ENCODE measurements at regions of chr14 and their contacts with region 1.

Region 1: DNA sequence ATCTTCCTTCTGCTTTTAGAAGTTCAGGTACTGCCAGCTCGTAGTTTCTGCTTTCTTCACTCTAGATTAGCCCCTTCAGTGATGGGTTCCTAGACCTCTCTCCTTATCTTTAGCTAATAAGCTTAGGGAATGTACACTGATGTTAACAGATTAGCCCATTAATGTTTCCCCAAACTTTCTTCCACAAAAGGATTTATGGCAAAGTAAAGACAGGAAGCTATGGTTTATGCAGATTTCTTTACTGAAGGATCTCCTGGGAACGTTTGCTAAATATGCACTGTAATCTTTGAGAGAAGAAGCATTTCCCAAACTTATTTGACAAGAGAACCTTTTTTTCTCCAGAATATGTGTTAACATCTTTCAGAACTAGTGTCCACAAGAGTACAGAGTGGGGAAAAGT is 4.2 kb downstream of the SOCS4 start:
- DNase-seq: peak; percentile 73
- H3K4me3 ChIP-seq: peak overlapping the region; percentile 4
- H3K27ac ChIP-seq: peak overlapping the region; percentile 61
- H3K4me1 ChIP-seq: peaks cover 46% of the 10 kb centered on the region
- H3K27me3 ChIP-seq: no peaks in the 10 kb centered on the region
- CTCF ChIP-seq: no peak

Region 2: DNA sequence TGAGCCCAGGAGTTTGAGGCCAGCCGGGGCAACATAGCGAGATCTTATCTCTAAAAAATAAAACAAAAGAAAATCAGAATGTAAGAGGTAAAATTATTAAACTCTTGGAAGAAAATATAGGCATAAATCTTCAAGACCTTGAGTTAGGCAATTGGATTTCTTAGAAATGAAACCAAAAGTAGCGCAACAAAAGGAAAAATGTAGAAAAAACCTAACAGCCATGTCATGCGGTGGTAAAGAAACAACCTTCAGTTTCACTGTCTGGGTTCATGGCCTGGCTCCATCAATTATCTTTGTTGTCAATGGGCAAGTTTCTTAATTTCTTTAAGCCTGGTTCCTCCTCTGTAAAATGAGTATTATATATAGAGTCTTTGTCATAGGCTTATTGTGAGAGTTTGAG is 123.0 kb before region 1 on chr14:
- CTCF ChIA-PET with region 1: no interaction called
- POLR2A ChIA-PET with region 1: no interaction called
- intact Hi-C with region 1: no loop called
- DNase-seq: no peak
- H3K4me3 ChIP-seq: no peak overlapping the region
- H3K27ac ChIP-seq: no peak overlapping the region
- H3K4me1 ChIP-seq: no peaks in the 10 kb centered on the region
- H3K27me3 ChIP-seq: no peaks in the 10 kb centered on the region
- CTCF ChIP-seq: no peak

Region 3: DNA sequence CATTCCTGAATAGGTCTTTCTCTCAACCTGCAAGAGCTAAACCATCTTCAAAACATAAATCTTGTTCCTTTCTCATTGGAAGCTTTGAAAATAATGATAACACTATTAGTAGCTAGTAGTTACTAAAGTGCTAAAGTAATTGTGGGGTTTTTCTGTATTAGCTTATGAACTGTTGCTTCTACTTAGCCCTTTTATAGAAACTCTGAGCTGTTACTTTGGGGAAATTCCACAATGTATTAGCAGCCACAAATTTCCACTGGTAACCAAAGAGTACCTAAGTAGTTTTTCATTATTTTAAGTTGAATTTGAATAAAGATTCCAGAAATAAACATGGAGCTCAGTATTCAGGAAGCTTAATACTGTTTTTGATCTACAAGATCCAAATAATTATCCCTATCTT is 13.9 kb after region 1 on chr14:
- CTCF ChIA-PET with region 1: interaction called, 3 read pairs
- POLR2A ChIA-PET with region 1: interaction called, 4 read pairs
- intact Hi-C with region 1: loop called (anchors 2 kb)
- DNase-seq: no peak
- H3K4me3 ChIP-seq: no peak overlapping the region
- H3K27ac ChIP-seq: no peak overlapping the region
- H3K4me1 ChIP-seq: peaks cover 55% of the 10 kb centered on the region
- H3K27me3 ChIP-seq: no peaks in the 10 kb centered on the region
- CTCF ChIP-seq: no peak

Region 4: DNA sequence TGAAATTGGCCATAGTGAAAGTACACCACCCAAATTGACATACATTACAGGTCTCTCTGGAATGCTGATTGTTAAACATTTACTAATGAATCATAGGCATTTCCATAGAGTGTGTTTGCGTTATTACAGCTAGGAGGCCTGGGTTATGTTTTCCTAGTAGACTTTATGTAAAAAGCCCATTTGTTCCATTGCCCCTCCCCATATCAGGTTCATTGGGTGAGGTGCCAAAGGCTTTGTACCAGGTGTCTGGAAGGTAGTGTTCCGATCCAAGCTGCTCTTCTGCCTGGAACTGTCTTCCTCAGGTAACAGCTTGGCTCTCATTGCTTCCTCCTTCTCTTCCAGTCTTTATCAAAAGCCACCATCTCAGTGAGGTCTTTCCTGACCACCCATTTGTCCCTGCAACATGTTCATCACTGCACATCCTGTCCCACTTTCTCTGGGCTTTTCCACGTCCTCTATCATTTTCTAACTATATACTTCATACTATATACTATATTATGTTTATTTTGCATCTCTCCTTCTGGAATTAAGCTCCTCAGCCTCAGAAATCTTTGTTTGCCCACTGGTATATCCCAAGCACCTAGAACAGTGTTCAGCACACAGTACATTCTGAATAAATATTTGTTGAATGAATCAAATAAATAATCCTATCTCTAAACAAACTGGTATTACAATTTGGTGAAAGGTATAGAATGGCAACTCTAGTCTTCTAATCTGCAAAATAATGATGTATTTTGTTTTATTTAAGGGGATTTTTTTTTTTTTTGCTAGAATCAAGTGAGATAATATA is 801.1 kb after region 1 on chr14:
- CTCF ChIA-PET with region 1: no interaction called
- POLR2A ChIA-PET with region 1: no interaction called
- intact Hi-C with region 1: no loop called
- DNase-seq: no peak
- H3K4me3 ChIP-seq: no peak overlapping the region
- H3K27ac ChIP-seq: no peak overlapping the region
- H3K4me1 ChIP-seq: no peaks in the 10 kb centered on the region
- H3K27me3 ChIP-seq: no peaks in the 10 kb centered on the region
- CTCF ChIP-seq: no peak

Region 5: GRCh38 chr14:56659964-56660551 is 1628.9 kb after region 1 on chr14:
- CTCF ChIA-PET with region 1: no interaction called
- POLR2A ChIA-PET with region 1: no interaction called
- intact Hi-C with region 1: no loop called
- DNase-seq: peak; percentile 90
- H3K4me3 ChIP-seq: peak overlapping the region; percentile 29
- H3K27ac ChIP-seq: peak overlapping the region; percentile 84
- H3K4me1 ChIP-seq: peaks cover 25% of the 10 kb centered on the region
- H3K27me3 ChIP-seq: no peaks in the 10 kb centered on the region
- CTCF ChIP-seq: peak; percentile 94